Activated T-helper 2 cell treated with anti-CD3 and anti-CD28 coated beads, Interferon-gamma antibody, Interleukin-2, Interleukin-4, amounts not matched to agents 10 μg/mL and 5 μg/mL and 100 μg/mL, durations not matched to agents 14 hours and 24 hours and 36 hours (primary cell): ENCODE measurements at regions of chr9 and their contacts with region 1.

Region 1: GRCh38 chr9:79583952-79584654 is 12.3 kb downstream of the TLE4 start:
- DNase-seq: no peak
- H3K4me3 Mint-ChIP-seq: no peak overlapping the region
- H3K27ac Mint-ChIP-seq: no peak overlapping the region
- H3K4me1 Mint-ChIP-seq: peaks cover 66% of the 10 kb centered on the region
- H3K27me3 Mint-ChIP-seq: no peaks in the 10 kb centered on the region

Region 2: GRCh38 chr9:79471580-79472543 is 112.2 kb before region 1 on chr9:
- intact Hi-C with region 1: no loop called
- DNase-seq: no peak
- H3K4me3 Mint-ChIP-seq: no peak overlapping the region
- H3K27ac Mint-ChIP-seq: no peak overlapping the region
- H3K4me1 Mint-ChIP-seq: peaks cover 16% of the 10 kb centered on the region
- H3K27me3 Mint-ChIP-seq: no peaks in the 10 kb centered on the region

Region 3: DNA sequence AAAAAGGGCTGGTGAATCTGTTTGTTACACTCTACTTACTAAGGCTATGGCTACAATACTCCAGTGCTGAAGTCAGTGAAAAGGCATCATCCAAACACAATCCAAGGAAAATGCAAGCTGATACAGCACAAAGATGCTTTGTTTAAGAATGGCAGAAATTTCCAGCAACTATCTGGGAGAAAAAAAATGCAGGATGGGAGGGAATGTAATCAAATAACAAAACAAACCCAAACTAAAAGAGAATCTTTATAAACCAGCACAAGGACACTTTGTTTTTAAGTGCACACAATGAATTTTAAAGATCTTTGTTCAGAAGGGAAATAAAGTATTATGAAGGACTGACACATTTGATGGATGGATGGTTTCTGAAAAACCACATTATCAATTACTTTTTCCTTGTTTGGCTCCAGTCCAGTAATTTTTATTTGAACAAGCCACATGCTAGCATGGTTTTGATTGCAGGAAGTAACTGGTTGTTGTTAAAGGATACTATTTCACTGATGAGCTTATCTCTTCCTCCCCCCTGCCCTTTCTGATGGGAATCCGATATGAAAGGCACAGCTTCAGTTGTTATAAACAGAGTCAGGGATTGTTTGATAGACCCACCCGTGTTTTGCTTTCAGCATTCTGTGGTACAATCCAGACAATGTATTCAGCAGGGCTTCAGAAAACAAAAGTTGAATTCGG is 24.5 kb before region 1 on chr9:
- intact Hi-C with region 1: no loop called
- DNase-seq: no peak
- H3K4me3 Mint-ChIP-seq: no peak overlapping the region
- H3K27ac Mint-ChIP-seq: no peak overlapping the region
- H3K4me1 Mint-ChIP-seq: no peaks in the 10 kb centered on the region
- H3K27me3 Mint-ChIP-seq: peaks cover 21% of the 10 kb centered on the region

Region 4: GRCh38 chr9:79623799-79624721 is 40.0 kb after region 1 on chr9:
- intact Hi-C with region 1: loop called (anchors 2 kb)
- DNase-seq: no peak
- H3K4me3 Mint-ChIP-seq: peak overlapping the region; percentile 57
- H3K27ac Mint-ChIP-seq: peak overlapping the region; percentile 81
- H3K4me1 Mint-ChIP-seq: peaks cover 30% of the 10 kb centered on the region
- H3K27me3 Mint-ChIP-seq: no peaks in the 10 kb centered on the region